Right ventricle myocardium inferior (tissue), 1 donor: ENCODE measurements at regions of chr16 and their contacts with region 1.

Region 1: DNA sequence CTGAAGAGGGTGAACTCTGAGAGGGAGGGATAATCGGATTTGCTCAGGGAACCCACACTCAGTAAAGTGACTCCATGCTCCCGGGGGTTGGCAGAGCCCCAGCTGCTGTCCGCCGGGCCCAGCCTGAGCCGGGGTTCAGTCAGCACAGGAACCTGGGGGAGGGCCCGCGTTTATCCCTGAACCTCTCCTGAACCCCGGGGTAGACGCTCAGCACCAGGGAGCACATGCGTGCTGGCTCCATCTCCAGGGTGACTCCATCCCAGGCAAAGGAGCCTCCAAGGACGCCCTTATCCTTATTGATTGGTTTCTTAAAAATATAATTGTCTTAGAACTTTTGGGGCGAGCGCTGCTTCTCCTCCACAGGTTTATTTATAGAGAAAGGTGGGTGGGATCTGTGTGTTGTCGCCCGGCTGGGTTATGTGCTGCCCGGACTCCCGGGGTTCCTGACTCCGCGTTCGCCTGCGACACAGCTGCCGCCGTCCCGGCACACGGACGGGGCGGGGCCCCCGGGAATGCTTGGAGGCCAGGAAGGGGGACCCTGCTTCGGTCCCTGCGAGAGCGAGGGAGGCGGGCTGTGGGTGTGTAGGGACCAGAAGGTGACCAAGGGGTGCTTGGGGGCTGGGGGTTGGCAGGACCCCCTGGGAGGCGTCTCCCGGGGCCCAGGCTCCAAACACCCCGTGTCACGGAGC is 3.9 kb downstream of the CACNA1H start:
- DNase-seq: no peak
- ATAC-seq: no peak

Region 2: DNA sequence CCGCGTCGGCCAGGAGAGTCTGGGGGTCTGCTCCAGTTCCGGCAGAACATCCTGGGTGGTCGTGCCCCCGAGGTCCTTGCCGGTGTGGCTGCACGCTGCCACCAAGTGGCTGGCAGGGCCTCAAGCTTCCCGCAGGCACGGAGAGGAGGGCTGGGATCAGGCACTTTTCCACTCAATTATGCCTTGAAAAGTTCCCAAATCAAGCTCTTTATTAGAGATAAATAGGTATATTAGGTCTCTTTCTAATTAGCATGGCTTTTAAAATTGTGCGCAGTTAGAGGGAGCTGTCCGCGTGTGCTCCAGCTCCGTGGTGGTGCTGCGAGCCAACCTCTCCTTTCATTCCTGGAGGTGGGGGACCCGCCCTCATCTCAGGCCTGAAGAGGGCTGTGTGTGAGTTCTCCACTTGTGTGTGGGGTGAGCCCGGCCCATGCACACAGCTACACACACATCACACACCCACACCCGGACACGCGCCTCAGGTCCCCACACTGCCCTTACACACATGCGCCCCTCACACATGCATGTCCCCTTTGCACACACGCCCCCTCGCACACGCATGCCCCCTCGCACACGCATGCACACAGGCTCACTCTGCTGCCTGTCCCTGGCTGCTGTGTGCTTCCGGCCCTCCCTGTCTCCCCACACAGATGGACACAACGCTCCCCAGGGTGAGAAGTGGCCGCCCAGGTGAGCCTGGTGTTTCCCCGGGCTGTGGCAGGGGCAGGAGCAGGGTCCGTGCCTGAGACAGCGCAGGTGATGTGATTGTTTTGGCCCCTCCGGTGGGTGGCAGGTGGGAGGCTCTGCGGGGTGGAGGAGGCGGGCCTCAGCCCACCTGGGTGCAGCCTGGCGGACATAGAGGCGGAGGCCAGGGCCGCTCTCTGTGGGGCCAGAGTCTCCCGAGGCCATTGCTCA is 24.9 kb after region 1 on chr16:
- intact Hi-C with region 1: loop called (anchors 2 kb)
- DNase-seq: no peak
- ATAC-seq: no peak